CD8-positive, alpha-beta T cell (primary cell): ENCODE measurements at regions of chr15 and their contacts with region 1.

Region 1: GRCh38 chr15:92797168-92797951 is 102.8 kb upstream of the CHD2 start:
- DNase-seq: peak in 4 of 9 experiments; percentile 22 to 87 (median 67)
- ATAC-seq: peak; percentile 95
- H3K4me3 ChIP-seq: no peak overlapping the region
- H3K4me3 Mint-ChIP-seq: no peak overlapping the region
- H3K27ac ChIP-seq: no peak overlapping the region
- H3K27ac Mint-ChIP-seq: peak overlapping the region; percentile 65
- H3K4me1 ChIP-seq: peaks cover 3% of the 10 kb centered on the region
- H3K4me1 Mint-ChIP-seq: peaks cover 6% of the 10 kb centered on the region
- H3K27me3 ChIP-seq: no peaks in the 10 kb centered on the region
- H3K27me3 Mint-ChIP-seq: no peaks in the 10 kb centered on the region
- CTCF ChIP-seq: peak; percentile 74

Region 2: DNA sequence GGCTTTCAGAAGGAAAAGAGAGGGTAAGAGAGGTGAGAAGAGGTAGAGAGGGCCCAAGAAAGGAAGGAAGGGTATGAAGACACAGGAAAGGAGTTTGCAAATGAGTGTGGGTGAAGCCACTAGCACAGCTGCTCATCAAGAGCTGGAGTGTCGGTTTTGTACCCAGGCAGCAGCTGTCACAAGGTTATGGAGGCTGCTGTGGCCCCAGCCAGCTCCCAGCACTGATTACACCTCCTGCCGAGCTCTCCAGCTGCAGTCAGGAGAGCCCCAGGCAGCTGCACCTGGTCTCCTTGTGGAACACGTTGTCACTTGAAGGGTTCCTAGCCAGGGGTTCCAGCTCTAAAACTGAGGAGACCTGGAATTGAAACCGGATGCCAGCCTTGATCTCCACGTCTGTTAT is 42.3 kb after region 1 on chr15:
- CTCF ChIA-PET with region 1: no interaction called
- POLR2A ChIA-PET with region 1: no interaction called
- intact Hi-C with region 1: no loop called
- DNase-seq: no peak
- ATAC-seq: no peak
- H3K4me3 ChIP-seq: peak overlapping the region in 1 of 2 experiments; percentile 31
- H3K4me3 Mint-ChIP-seq: peak overlapping the region; percentile 44
- H3K27ac ChIP-seq: peak overlapping the region; percentile 9 to 48
- H3K27ac Mint-ChIP-seq: peak overlapping the region; percentile 56
- H3K4me1 ChIP-seq: peaks cover 50% of the 10 kb centered on the region
- H3K4me1 Mint-ChIP-seq: peaks cover 52% of the 10 kb centered on the region
- H3K27me3 ChIP-seq: no peaks in the 10 kb centered on the region
- H3K27me3 Mint-ChIP-seq: no peaks in the 10 kb centered on the region
- CTCF ChIP-seq: no peak

Region 3: GRCh38 chr15:92903941-92904831 is 106.8 kb after region 1 on chr15:
- CTCF ChIA-PET with region 1: interaction called, 15 read pairs
- POLR2A ChIA-PET with region 1: interaction called, 12 read pairs
- intact Hi-C with region 1: no loop called
- DNase-seq: peak; percentile 98 to 99 (median 99)
- ATAC-seq: peak; percentile 77
- H3K4me3 ChIP-seq: peak overlapping the region; percentile 75 to 88
- H3K4me3 Mint-ChIP-seq: peak overlapping the region; percentile 94
- H3K27ac ChIP-seq: peak overlapping the region; percentile 95 to 99
- H3K27ac Mint-ChIP-seq: peak overlapping the region; percentile 99
- H3K4me1 ChIP-seq: peaks cover 60% of the 10 kb centered on the region
- H3K4me1 Mint-ChIP-seq: peaks cover 58% of the 10 kb centered on the region
- H3K27me3 ChIP-seq: no peaks in the 10 kb centered on the region
- H3K27me3 Mint-ChIP-seq: no peaks in the 10 kb centered on the region
- CTCF ChIP-seq: no peak

Region 4: DNA sequence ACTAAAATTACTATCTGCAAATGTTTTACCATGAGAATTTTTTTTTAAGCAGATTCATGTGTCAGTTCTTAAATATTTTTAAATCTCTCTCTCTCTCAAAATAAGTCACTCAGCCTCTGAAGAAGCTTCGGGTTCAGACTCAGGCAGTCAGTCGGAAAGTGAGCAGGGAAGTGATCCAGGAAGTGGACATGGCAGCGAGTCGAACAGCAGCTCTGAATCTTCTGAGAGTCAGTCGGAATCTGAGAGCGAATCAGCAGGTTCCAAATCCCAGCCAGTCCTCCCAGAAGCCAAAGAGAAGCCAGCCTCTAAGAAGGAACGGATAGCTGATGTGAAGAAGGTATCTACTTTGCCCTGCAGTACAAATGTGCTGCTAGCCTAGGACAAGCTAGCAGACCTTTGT is 126.9 kb after region 1 on chr15:
- CTCF ChIA-PET with region 1: interaction called, 153 read pairs
- POLR2A ChIA-PET with region 1: interaction called, 5 read pairs
- intact Hi-C with region 1: no loop called
- DNase-seq: no peak
- ATAC-seq: no peak
- H3K4me3 ChIP-seq: no peak overlapping the region
- H3K4me3 Mint-ChIP-seq: no peak overlapping the region
- H3K27ac ChIP-seq: no peak overlapping the region
- H3K27ac Mint-ChIP-seq: peak overlapping the region; percentile 78
- H3K4me1 ChIP-seq: peaks cover 50% of the 10 kb centered on the region
- H3K4me1 Mint-ChIP-seq: peaks cover 84% of the 10 kb centered on the region
- H3K27me3 ChIP-seq: no peaks in the 10 kb centered on the region
- H3K27me3 Mint-ChIP-seq: no peaks in the 10 kb centered on the region
- CTCF ChIP-seq: no peak

Region 5: GRCh38 chr15:92938387-92938786 is 141.0 kb after region 1 on chr15:
- CTCF ChIA-PET with region 1: interaction called, 11 read pairs
- POLR2A ChIA-PET with region 1: no interaction called
- intact Hi-C with region 1: no loop called
- DNase-seq: no peak
- ATAC-seq: peak; percentile 36
- H3K4me3 ChIP-seq: no peak overlapping the region
- H3K4me3 Mint-ChIP-seq: no peak overlapping the region
- H3K27ac ChIP-seq: no peak overlapping the region
- H3K27ac Mint-ChIP-seq: no peak overlapping the region
- H3K4me1 ChIP-seq: peaks cover 21% of the 10 kb centered on the region
- H3K4me1 Mint-ChIP-seq: peaks cover 49% of the 10 kb centered on the region
- H3K27me3 ChIP-seq: no peaks in the 10 kb centered on the region
- H3K27me3 Mint-ChIP-seq: no peaks in the 10 kb centered on the region
- CTCF ChIP-seq: peak; percentile 40

Region 6: DNA sequence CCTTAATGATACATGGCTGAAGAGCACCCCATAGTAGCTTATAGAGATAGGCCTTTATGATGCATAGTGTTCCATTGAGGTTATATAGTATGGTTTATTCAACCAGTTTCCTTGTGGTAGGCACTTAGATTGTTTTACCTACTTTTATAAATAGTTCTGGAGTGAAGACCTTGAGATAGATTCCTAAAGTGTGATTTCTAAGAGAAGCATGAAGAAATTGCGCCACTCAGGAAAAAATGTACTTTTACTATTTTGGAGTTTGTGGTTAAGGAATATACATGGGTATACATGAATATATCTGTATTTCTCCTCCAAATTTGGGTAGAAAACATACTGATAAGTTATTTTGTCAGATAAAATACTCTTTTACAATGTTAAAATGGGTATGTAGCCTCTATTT is 173.3 kb after region 1 on chr15:
- CTCF ChIA-PET with region 1: interaction called, 5 read pairs
- POLR2A ChIA-PET with region 1: interaction called, 3 read pairs
- intact Hi-C with region 1: loop called in 1 of 2 experiments (anchors 5 kb)
- DNase-seq: no peak
- ATAC-seq: no peak
- H3K4me3 ChIP-seq: no peak overlapping the region
- H3K4me3 Mint-ChIP-seq: no peak overlapping the region
- H3K27ac ChIP-seq: no peak overlapping the region
- H3K27ac Mint-ChIP-seq: peak overlapping the region; percentile 10
- H3K4me1 ChIP-seq: peaks cover 4% of the 10 kb centered on the region
- H3K4me1 Mint-ChIP-seq: peaks cover 46% of the 10 kb centered on the region
- H3K27me3 ChIP-seq: no peaks in the 10 kb centered on the region
- H3K27me3 Mint-ChIP-seq: no peaks in the 10 kb centered on the region
- CTCF ChIP-seq: no peak

Region 7: GRCh38 chr15:92981333-92981732 is 184.0 kb after region 1 on chr15:
- CTCF ChIA-PET with region 1: interaction called, 10 read pairs
- POLR2A ChIA-PET with region 1: no interaction called
- intact Hi-C with region 1: no loop called
- DNase-seq: no peak
- ATAC-seq: no peak
- H3K4me3 ChIP-seq: no peak overlapping the region
- H3K4me3 Mint-ChIP-seq: no peak overlapping the region
- H3K27ac ChIP-seq: no peak overlapping the region
- H3K27ac Mint-ChIP-seq: no peak overlapping the region
- H3K4me1 ChIP-seq: no peaks in the 10 kb centered on the region
- H3K4me1 Mint-ChIP-seq: peaks cover 24% of the 10 kb centered on the region
- H3K27me3 ChIP-seq: no peaks in the 10 kb centered on the region
- H3K27me3 Mint-ChIP-seq: no peaks in the 10 kb centered on the region
- CTCF ChIP-seq: no peak